ENCODE measurements at regions of chr10 and their contacts with region 1.

Region 1: DNA sequence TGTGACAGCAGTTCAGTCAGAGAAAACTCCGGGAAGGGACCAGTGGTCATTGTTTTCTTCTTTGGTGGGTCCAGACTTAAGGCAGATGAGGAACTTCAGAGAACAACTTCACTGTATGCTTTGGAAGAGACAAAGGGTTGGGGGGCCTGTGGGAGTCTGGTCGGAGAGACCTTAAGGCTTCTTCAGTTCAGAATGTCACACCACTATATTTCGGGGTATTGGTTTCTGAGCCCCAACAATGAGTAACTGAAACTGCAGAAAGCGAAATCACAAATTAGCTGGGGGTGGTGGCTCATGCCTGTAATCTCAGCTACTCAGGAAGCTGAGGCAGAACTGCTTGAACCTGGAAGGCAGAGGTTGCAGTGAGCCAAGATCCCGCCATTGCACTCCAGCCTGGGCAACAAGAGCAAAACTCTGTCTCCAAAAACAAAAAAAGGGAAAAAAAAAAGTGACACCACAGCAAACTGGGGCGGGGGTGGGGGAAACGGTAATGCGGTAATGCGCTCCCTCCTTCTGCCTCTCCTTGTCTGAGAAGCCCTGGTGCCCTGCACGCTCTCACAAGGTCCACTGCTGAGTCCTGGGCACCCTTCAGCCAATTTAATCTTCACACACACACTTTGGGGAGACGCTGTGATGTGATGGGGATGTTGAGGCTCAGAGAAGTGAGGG is 2.2 kb upstream of the ADIRF start:
- DNase-seq: no peak
- H3K4me3 ChIP-seq: no peak overlapping the region
- H3K27ac ChIP-seq: peak overlapping the region; percentile 63 to 76
- H3K4me1 ChIP-seq: peaks cover 18% of the 10 kb centered on the region
- H3K27me3 ChIP-seq: no peaks in the 10 kb centered on the region
- CTCF ChIP-seq: no peak
- EP300 ChIP-seq: no peak
- POLR2A ChIP-seq: no peak

Region 2: DNA sequence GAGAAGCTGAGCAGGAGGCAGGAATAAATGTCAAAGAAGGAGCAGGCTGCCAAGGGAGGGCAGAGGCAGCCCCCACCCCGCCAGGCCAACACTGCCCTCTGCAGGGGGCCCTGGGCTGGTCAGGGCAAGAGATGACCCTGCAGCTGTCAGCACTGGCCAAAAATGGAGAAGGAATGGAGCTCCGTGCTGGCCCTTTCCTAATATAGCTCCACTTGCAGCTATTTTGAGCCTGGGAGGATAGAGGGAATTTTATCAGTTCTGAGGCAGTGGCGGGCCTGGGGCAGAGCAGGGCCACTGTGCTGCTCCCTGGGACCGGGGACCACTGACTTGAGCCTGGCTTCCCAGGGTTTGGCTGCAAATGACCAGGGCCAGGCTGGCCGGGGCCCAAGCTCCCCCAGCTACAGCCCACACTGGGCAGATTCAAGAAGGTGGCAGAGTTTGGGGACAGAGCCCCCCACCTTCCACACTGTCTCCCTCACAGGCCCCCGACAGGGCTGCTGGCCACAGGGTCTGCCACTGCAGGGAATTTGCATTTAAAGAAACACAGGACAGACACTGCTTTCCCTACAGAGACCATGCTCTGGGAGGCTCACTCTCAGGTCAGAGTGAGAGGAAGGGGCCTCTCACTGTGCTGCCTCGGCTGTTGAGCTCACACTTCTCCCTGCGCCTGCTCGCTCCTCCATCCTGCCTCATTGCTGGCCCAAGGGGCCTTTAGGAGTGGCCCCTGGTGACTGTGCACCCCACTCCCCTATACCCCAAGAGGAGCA is 281.6 kb before region 1 on chr10:
- intact Hi-C with region 1: no loop called
- DNase-seq: peak; percentile 57 to 72 (median 62)
- H3K4me3 ChIP-seq: no peak overlapping the region
- H3K27ac ChIP-seq: no peak overlapping the region
- H3K4me1 ChIP-seq: peaks cover 12% of the 10 kb centered on the region
- H3K27me3 ChIP-seq: no peaks in the 10 kb centered on the region
- CTCF ChIP-seq: peak in 1 of 3 donors; percentile 22
- EP300 ChIP-seq: no peak
- POLR2A ChIP-seq: no peak

Region 3: GRCh38 chr10:86918022-86918471 is 48.1 kb before region 1 on chr10:
- intact Hi-C with region 1: no loop called
- DNase-seq: no peak
- H3K4me3 ChIP-seq: no peak overlapping the region
- H3K27ac ChIP-seq: no peak overlapping the region
- H3K4me1 ChIP-seq: peaks cover 5% of the 10 kb centered on the region
- H3K27me3 ChIP-seq: no peaks in the 10 kb centered on the region
- CTCF ChIP-seq: no peak
- EP300 ChIP-seq: no peak
- POLR2A ChIP-seq: no peak

Region 4: GRCh38 chr10:86936661-86937501 is 29.2 kb before region 1 on chr10:
- intact Hi-C with region 1: loop called in 2 of 4 experiments (anchors 1 to 2 kb)
- DNase-seq: peak in 2 of 5 donors; percentile 36 to 45
- H3K4me3 ChIP-seq: no peak overlapping the region
- H3K27ac ChIP-seq: no peak overlapping the region
- H3K4me1 ChIP-seq: peaks cover 2% of the 10 kb centered on the region
- H3K27me3 ChIP-seq: no peaks in the 10 kb centered on the region
- CTCF ChIP-seq: no peak
- EP300 ChIP-seq: no peak
- POLR2A ChIP-seq: no peak

Region 5: GRCh38 chr10:86942443-86943075 is 23.6 kb before region 1 on chr10:
- intact Hi-C with region 1: loop called in 2 of 4 experiments (anchors 1 to 2 kb)
- DNase-seq: peak in 2 of 5 donors; percentile 46 to 57
- H3K4me3 ChIP-seq: no peak overlapping the region
- H3K27ac ChIP-seq: no peak overlapping the region
- H3K4me1 ChIP-seq: peaks cover 12% of the 10 kb centered on the region
- H3K27me3 ChIP-seq: no peaks in the 10 kb centered on the region
- CTCF ChIP-seq: no peak
- EP300 ChIP-seq: no peak
- POLR2A ChIP-seq: no peak